Heart right ventricle (tissue), 16 donors: ENCODE measurements at regions of chr14 and their contacts with region 1.

Region 1: GRCh38 chr14:96584199-96584906 is 82.2 kb downstream of the PAPOLA start:
- DNase-seq: no peak
- ATAC-seq: peak in 7 of 8 donors; percentile 27 to 75 (median 62)
- H3K4me3 ChIP-seq: no peak overlapping the region
- H3K27ac ChIP-seq: no peak overlapping the region
- H3K4me1 ChIP-seq: peaks cover 0 to 5% (median 0%) of the 10 kb centered on the region in 9 donors
- H3K27me3 ChIP-seq: peaks cover 0 to 48% (median 37%) of the 10 kb centered on the region in 7 donors
- CTCF ChIP-seq: peak in 7 of 9 donors; percentile 25 to 39 (median 36)

Region 2: GRCh38 chr14:96309896-96310330 is 274.4 kb before region 1 on chr14:
- intact Hi-C with region 1: no loop called
- DNase-seq: no peak
- ATAC-seq: no peak
- H3K4me3 ChIP-seq: no peak overlapping the region
- H3K27ac ChIP-seq: no peak overlapping the region
- H3K4me1 ChIP-seq: no peaks in the 10 kb centered on the region
- H3K27me3 ChIP-seq: no peaks in the 10 kb centered on the region
- CTCF ChIP-seq: peak in 1 of 9 donors; percentile 8

Region 3: DNA sequence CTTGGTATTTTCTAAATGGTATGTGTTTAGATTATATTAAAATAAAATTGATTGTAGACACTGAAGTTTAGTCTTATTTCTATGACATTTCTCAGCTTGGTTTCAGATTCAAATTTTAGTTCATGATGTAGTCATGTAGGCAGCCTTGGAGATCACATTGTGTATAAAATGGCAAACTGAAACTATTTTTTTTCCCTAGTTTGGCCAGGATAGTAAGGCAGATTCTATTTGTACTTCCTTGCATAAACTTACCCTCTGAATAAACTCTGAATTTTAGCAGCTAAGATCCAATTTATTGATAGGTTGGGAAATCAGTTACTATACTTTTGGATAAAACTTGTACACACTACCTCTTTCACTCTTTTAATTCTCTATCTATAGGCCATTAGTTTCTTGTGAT is 51.7 kb before region 1 on chr14:
- intact Hi-C with region 1: no loop called
- DNase-seq: no peak
- ATAC-seq: no peak
- H3K4me3 ChIP-seq: no peak overlapping the region
- H3K27ac ChIP-seq: no peak overlapping the region
- H3K4me1 ChIP-seq: no peaks in the 10 kb centered on the region
- H3K27me3 ChIP-seq: no peaks in the 10 kb centered on the region
- CTCF ChIP-seq: no peak

Region 4: DNA sequence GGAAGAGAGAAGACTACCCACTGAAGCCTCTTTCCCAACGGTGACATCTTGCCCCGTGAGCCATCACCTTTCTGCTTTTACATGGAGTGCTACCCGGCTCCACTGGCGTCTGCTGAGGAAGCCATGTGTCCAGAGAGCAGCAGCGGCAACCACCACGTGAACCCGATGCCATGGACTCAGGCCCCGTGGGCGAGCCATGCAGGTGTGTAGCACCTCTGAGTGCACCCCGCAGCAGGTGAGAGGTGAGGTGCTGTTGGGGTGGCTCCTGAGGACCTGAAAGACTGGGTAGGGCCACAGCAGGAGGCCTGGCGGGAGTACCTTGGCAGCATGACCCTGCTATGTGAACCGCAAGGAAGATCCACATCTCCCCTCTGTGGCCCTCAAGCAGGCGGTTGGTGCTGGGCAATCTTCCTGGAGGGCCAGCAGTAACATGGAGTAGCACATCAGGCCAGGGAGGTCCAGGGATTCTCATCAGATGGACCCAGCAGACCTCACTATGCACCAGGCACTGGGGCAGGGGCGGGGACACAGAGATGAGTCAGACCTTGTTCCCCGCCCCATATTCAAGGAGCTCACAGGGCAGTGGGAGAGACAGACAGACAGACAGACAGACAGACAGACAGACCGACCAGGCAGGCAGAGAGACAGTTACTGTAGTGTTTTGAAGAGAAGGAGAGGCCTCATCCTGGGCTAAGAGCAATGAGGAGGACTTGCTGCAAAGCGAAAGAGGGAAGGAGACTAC is 47.4 kb after region 1 on chr14:
- intact Hi-C with region 1: no loop called
- DNase-seq: no peak
- ATAC-seq: no peak
- H3K4me3 ChIP-seq: no peak overlapping the region
- H3K27ac ChIP-seq: no peak overlapping the region
- H3K4me1 ChIP-seq: no peaks in the 10 kb centered on the region
- H3K27me3 ChIP-seq: peaks cover 0 to 8% (median 3%) of the 10 kb centered on the region in 7 donors
- CTCF ChIP-seq: no peak

Region 5: DNA sequence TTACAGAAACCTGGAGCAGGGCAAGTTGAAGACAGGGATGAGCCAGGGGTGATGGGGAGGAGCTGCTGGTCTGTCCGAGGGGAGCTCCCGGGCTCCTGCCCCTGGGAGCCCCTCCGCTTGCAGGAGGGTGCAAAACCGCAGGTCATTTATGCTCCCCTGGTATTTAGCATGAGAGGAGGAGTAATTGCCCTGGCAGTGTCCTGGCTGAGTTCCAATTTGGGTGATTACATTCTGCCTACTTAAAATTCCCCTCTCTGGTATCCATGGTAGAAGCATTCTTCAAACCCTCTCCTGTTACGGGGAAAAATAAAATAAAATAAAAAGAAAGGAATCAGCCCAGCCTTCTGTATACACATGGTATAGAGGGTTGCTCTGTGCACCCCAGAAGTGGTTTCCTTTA is 151.2 kb after region 1 on chr14:
- intact Hi-C with region 1: loop called in 5 of 10 experiments (anchors 5 to 10 kb)
- DNase-seq: no peak
- ATAC-seq: no peak
- H3K4me3 ChIP-seq: no peak overlapping the region
- H3K27ac ChIP-seq: no peak overlapping the region
- H3K4me1 ChIP-seq: no peaks in the 10 kb centered on the region
- H3K27me3 ChIP-seq: peaks cover 0 to 80% (median 70%) of the 10 kb centered on the region in 7 donors
- CTCF ChIP-seq: no peak

Region 6: DNA sequence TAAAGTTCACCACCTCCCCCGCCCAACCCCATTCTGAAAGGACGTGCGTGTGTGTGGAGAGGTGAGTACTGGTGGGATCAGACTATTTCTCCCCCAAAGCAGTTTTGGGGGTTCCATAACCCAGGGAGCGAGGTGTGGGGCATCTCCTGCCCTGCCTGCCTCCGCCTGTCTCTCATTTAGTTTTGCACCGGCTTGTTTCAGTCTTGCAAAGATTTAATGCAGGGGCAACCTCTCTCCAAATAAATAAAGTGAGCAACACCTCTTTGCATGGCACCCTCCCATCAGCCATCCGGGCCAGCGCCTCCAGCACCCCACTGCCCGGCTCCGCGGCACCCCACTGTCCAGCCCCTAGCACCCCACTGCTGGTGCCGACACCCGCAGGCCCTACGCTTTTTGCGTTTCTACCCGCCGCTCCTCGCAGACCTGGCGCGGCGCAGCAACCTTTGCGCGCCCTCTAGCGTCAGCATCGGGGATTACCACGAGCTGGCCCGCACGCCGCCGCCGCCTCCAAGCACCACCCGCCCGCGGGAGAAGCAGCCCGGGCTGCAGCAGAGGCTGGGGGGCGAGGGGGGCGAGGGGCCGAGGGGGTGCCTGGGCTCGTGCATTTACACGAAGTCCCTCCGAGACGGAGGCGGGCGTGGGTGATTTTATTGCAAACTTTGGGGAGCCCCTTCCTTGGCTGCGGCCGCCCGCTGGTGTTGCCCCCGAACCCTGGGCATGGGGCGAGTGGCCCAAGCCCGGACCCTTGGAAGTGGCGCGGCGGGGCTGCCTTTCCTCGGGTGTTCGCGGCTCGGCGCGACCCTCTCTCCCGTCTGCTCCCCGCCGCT is 157.0 kb after region 1 on chr14:
- intact Hi-C with region 1: loop called in 5 of 10 experiments (anchors 5 to 10 kb)
- DNase-seq: peak; percentile 25 to 65
- ATAC-seq: peak; percentile 49 to 77 (median 68)
- H3K4me3 ChIP-seq: peak overlapping the region in 9 of 10 donors; percentile 15 to 50 (median 41)
- H3K27ac ChIP-seq: no peak overlapping the region
- H3K4me1 ChIP-seq: peaks cover 0 to 11% (median 8%) of the 10 kb centered on the region in 9 donors
- H3K27me3 ChIP-seq: peaks cover 4 to 99% (median 87%) of the 10 kb centered on the region in 7 donors
- CTCF ChIP-seq: peak; percentile 77 to 93 (median 87)